CD8-positive, alpha-beta memory T cell (primary cell): ENCODE measurements at regions of chr10 and their contacts with region 1.

Region 1: GRCh38 chr10:35150308-35150707 is 23.7 kb downstream of the CREM start:
- DNase-seq: no peak
- H3K4me3 ChIP-seq: no peak overlapping the region
- H3K4me3 Mint-ChIP-seq: peak overlapping the region in 4 of 7 donors; percentile 16 to 64 (median 56)
- H3K27ac ChIP-seq: no peak overlapping the region
- H3K27ac Mint-ChIP-seq: peak overlapping the region; percentile 79 to 98 (median 96)
- H3K4me1 ChIP-seq: peaks cover 17% of the 10 kb centered on the region
- H3K4me1 Mint-ChIP-seq: peaks cover 23 to 38% (median 30%) of the 10 kb centered on the region in 3 donors
- H3K27me3 ChIP-seq: no peaks in the 10 kb centered on the region
- H3K27me3 Mint-ChIP-seq: peaks cover 0 to 1% of the 10 kb centered on the region in 2 donors

Region 2: GRCh38 chr10:35165136-35165535 is 14.8 kb after region 1 on chr10:
- CTCF ChIA-PET with region 1: no interaction called
- POLR2A ChIA-PET with region 1: no interaction called
- DNase-seq: no peak
- H3K4me3 ChIP-seq: no peak overlapping the region
- H3K4me3 Mint-ChIP-seq: no peak overlapping the region
- H3K27ac ChIP-seq: no peak overlapping the region
- H3K27ac Mint-ChIP-seq: peak overlapping the region in 3 of 8 donors; percentile 42 to 80 (median 53)
- H3K4me1 ChIP-seq: no peaks in the 10 kb centered on the region
- H3K4me1 Mint-ChIP-seq: no peaks in the 10 kb centered on the region
- H3K27me3 ChIP-seq: no peaks in the 10 kb centered on the region
- H3K27me3 Mint-ChIP-seq: no peaks in the 10 kb centered on the region

Region 3: GRCh38 chr10:35643151-35644044 is 493.1 kb after region 1 on chr10:
- CTCF ChIA-PET with region 1: no interaction called
- POLR2A ChIA-PET with region 1: interaction called, 19 read pairs
- DNase-seq: peak in 2 of 5 donors; percentile 10 to 17
- H3K4me3 ChIP-seq: peak overlapping the region; percentile 74
- H3K4me3 Mint-ChIP-seq: peak overlapping the region; percentile 73 to 93 (median 82)
- H3K27ac ChIP-seq: no peak overlapping the region
- H3K27ac Mint-ChIP-seq: peak overlapping the region in 4 of 8 donors; percentile 3 to 89 (median 14)
- H3K4me1 ChIP-seq: peaks cover 13% of the 10 kb centered on the region
- H3K4me1 Mint-ChIP-seq: peaks cover 16 to 34% (median 18%) of the 10 kb centered on the region in 3 donors
- H3K27me3 ChIP-seq: peaks cover 11% of the 10 kb centered on the region
- H3K27me3 Mint-ChIP-seq: peaks cover 11 to 29% of the 10 kb centered on the region in 2 donors